MCF 10A (cell line): ENCODE measurements at regions of chr5 and their contacts with region 1.

Region 1: DNA sequence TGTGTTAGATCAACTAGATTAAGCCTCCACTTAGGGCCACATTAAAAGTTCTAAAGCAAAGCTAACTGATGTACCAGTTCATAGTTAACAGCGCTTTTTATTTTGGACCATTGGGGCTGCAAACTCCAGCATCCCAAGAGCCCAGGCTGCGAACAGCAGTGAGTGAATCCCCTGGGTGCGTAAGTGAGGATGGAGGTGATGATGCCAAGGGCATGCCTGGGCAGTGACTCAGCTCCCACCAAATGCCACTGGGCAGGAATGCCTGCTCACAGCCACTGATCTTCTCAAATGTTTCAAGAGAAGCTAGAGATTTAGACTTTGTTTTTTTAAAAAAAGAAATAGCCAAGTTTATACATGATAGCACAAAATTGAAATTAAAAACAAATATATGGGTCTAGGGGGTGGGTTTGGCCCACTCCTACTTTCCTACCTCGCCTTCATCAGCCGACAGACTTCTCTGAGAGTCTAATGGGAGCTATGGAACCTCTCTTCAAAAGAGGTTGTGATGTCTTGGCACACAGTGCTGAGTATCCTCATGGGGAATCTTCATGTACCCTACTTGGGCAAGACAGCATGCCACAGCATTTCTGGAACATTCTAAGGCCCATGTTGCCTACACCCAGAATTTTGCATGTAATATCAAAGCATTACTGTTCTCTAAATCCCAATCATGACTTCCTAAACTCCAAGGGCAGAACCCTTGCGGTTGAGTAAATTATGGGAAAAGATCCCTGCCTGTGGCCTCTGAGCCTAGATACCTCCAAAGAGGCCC is 398.1 kb downstream of the EBF1 start:
- DNase-seq: peak; percentile 82
- H3K4me3 Mint-ChIP-seq: no peak overlapping the region
- H3K27ac Mint-ChIP-seq: peak overlapping the region; percentile 12
- H3K4me1 Mint-ChIP-seq: peaks cover 23% of the 10 kb centered on the region
- H3K27me3 Mint-ChIP-seq: peaks cover 11% of the 10 kb centered on the region
- CTCF ChIP-seq: no peak

Region 2: DNA sequence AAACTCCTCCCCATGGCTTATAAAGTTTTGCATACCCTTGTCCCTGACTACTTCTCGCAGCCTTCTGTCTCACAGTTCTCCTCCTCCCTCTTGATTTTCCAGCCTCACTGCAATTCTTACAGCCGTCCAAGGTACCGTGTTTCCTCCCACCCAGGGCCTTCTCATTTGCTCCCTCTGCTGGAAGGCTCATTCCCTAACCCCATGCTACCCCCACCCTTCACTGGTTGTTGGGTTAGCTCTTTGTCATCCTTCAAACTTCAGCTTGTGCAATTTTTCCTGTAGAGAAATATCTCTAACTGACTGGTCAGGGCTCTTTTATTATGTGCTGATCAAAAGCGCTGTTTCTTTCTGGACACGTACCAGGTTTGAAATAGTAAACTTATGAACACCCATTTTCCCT is 68.9 kb after region 1 on chr5:
- CTCF ChIA-PET with region 1: no interaction called
- POLR2A ChIA-PET with region 1: no interaction called
- intact Hi-C with region 1: no loop called
- DNase-seq: peak; percentile 50
- H3K4me3 Mint-ChIP-seq: no peak overlapping the region
- H3K27ac Mint-ChIP-seq: peak overlapping the region; percentile 1
- H3K4me1 Mint-ChIP-seq: peaks cover 15% of the 10 kb centered on the region
- H3K27me3 Mint-ChIP-seq: peaks cover 22% of the 10 kb centered on the region
- CTCF ChIP-seq: no peak

Region 3: GRCh38 chr5:158875272-158875679 is 173.7 kb after region 1 on chr5:
- CTCF ChIA-PET with region 1: interaction called, 3 read pairs
- POLR2A ChIA-PET with region 1: no interaction called
- intact Hi-C with region 1: loop called (anchors 10 kb)
- DNase-seq: peak; percentile 30
- H3K4me3 Mint-ChIP-seq: peak overlapping the region; percentile 33
- H3K27ac Mint-ChIP-seq: peak overlapping the region; percentile 31
- H3K4me1 Mint-ChIP-seq: peaks cover 21% of the 10 kb centered on the region
- H3K27me3 Mint-ChIP-seq: peaks cover under 1% of the 10 kb centered on the region
- CTCF ChIP-seq: no peak